ENCODE measurements at regions of chr5 and their contacts with region 1.

Region 1: DNA sequence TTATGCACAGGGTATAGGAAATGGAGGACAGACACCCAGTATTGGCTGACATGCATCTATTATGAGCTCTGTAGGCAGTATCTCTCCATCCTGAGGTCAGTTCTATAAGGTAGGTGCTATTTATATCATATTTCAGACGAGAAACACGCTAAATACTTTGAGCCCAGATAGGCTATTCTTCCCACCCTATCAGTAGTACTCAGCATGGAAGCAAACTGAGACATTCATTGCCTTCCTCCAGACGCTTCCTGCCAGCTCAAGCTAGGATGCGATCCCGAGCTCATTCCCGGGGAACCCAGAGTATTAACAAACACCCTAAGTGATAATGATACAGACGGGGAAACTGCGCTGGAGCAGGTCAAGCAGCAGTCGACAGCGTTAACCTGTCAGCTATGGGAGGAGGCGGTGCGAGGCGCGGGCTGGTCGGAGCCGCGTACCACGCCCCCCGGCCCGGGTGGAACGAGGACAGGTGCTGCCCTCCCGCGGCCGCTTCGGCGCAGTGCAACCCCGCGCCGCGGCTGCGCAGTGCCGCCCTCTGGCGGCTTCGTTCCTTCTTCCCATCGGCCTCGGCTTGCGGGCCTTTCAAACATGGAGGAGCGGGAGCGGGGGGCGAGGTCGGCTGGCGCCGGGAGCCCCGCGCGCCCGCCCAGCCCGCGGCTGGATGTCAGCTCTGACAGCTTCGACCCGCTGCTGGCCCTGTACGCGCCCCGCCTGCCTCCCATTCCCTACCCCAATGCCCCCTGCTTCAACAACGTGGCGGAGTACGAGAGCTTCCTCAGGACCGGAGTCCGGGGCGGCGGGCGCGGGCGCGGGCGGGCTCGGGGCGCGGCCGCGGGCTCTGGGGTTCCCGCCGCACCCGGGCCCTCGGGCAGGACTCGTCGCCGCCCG is at the start of gene LSM11:
- DNase-seq: no peak
- H3K4me3 ChIP-seq: peak within 1 kb of the TSS; percentile 80
- CTCF ChIP-seq: peak; percentile 100

Region 2: DNA sequence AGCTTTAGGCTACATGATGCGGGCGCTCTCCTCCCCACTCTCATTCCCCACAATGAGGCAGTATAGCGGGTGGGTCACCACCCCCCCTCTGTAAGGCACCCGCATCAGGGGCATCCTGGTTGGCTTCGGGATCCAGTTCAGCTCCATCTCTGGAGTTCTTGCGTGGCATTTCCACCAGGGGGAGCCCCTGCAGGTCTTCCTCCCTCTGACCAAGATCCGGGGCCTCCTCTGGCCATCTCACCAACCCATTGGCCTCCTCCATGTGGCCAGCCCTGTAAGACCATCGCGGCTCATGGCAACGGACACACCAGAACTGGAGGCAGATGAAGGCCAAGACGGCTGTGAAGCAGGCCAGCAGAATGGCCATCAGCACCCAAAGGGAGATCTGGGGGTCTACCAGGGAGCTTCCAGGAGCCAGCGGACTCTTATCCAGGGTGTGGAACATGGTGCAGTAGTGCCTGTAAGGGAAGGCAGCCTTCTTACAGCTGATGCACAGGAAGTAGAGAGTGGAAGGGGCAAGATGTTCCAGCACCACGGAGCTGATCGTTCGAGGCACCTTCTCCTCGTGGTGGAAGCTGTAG is 400.5 kb before region 1 on chr5:
- CTCF ChIA-PET with region 1: interaction called, 34 read pairs
- POLR2A ChIA-PET with region 1: no interaction called
- DNase-seq: no peak
- H3K4me3 ChIP-seq: no peak overlapping the region
- CTCF ChIP-seq: peak; percentile 58

Region 3: DNA sequence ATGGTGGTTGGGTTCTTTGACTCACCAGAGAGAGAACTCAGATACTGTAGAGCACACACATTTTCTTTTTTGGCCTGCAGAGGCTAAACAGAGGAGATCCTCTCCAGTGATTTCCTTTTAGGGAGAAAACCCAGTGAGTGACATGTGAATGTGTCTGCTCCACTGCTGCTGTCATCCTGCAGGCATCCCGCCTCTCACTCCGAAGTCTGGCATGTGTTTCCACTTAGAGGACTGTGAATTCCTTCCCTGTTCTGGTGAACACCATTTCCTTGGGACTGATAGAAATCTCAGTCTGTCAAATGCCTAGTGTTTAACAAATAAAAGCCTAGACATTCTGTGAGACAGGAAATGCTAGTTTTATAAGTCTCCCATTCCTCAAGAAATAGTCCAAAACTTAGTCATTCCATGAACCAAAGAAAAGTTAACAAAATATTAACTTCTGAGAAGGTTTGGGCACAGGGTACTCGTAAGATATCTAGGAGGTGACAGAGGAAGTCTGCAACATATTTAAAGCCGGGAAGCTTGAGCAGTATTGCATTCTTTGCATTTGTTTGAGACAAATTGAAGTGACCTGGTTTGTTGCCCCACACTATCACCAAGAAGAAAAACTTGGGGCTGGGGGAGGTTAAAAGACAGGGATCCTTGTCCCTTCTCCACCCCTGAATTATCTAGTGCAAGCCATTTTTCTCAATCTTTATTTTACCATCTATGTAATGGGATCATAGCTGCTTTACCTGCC is 358.3 kb before region 1 on chr5:
- CTCF ChIA-PET with region 1: interaction called, 10 read pairs
- POLR2A ChIA-PET with region 1: no interaction called
- DNase-seq: peak; percentile 100
- H3K4me3 ChIP-seq: no peak overlapping the region
- CTCF ChIP-seq: no peak

Region 4: GRCh38 chr5:157476702-157477408 is 266.6 kb before region 1 on chr5:
- CTCF ChIA-PET with region 1: interaction called, 19 read pairs
- POLR2A ChIA-PET with region 1: no interaction called
- DNase-seq: peak; percentile 29
- H3K4me3 ChIP-seq: no peak overlapping the region
- CTCF ChIP-seq: peak; percentile 73

Region 5: GRCh38 chr5:157563373-157563928 is 180.0 kb before region 1 on chr5:
- CTCF ChIA-PET with region 1: interaction called, 16 read pairs
- POLR2A ChIA-PET with region 1: interaction called, 3 read pairs
- DNase-seq: peak; percentile 83
- H3K4me3 ChIP-seq: no peak overlapping the region
- CTCF ChIP-seq: no peak

Region 6: DNA sequence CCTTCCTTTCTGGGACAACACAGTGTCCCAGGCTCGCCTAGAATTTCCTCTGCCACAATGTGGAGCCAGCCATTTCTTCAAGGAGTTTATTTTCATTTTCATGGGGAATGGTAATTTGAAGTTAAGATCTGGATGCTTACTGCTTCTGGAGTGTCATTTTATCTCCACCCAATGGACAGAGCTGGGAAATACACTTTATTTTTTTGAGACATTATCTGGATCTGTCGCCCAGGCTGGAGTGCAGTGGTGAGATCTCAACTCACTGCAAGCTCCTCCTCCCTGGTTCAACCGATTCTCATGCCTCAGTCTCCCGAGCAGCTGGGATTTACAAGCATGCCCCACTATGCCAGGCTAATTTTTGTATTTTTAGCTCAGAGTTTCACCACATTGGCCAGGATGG is 24.9 kb before region 1 on chr5:
- CTCF ChIA-PET with region 1: interaction called, 20 read pairs
- POLR2A ChIA-PET with region 1: no interaction called
- DNase-seq: no peak
- H3K4me3 ChIP-seq: no peak overlapping the region
- CTCF ChIP-seq: peak; percentile 55

Region 7: DNA sequence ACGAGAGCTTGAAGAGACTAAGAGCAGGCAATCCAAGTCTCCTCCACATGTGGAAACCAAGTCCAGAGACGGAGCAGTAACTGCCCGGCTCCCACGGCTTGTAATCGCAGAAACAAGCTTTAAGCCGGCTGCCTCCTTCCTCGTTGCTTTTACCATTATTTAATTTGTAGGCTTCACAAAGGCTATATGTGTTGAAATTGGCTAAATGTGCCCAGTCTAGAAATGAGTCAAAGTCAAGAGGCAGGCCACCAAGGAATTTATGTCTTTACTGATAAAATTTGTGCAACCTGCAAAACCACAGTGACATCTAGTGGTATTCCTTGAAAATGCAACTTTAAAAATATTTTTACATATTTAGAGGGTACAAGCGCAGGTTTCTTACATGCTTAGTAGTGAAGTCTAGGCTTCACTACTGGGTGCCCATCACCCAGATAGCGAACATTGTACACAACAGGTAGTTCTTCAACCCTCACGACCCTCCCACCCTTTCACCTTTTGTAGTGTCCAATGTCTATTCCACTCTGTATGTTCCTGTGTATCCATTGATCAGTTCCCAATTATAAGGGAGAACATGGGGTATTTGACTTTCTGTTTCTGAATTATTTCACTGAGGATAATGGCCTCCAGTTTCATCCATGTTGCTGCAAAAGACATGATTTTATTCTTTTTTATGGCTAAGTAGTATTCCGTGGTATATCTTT is 1389.8 kb after region 1 on chr5:
- CTCF ChIA-PET with region 1: interaction called, 11 read pairs
- POLR2A ChIA-PET with region 1: no interaction called
- DNase-seq: peak; percentile 40
- H3K4me3 ChIP-seq: no peak overlapping the region
- CTCF ChIP-seq: peak; percentile 50

Measured in AG04449 (cell line).